ENCODE measurements at regions of chr4 and their contacts with region 1.

Region 1: GRCh38 chr4:102344954-102345794 is at the start of gene SLC39A8:
- DNase-seq: peak; percentile 61 to 96 (median 74)

Region 2: DNA sequence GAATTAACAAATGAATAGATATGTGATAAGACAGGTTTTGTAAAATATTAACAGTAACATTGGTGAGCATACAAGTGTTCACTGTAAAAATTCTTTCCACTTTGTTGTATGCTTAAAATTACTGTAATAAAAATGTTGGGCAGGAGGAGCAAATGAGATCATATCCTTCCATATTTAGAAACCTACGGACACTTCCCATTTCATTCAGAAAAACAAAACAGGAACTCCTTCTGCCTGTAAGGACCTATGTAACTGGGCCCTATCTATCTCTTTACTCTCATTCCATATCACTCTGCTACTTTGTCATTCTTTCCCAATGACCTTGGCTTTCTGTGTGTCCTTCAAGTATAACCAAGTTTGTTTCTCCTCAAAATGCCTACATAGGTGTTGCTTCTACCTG is 53.8 kb after region 1 on chr4:
- intact Hi-C with region 1: no loop called
- DNase-seq: no peak

Region 3: DNA sequence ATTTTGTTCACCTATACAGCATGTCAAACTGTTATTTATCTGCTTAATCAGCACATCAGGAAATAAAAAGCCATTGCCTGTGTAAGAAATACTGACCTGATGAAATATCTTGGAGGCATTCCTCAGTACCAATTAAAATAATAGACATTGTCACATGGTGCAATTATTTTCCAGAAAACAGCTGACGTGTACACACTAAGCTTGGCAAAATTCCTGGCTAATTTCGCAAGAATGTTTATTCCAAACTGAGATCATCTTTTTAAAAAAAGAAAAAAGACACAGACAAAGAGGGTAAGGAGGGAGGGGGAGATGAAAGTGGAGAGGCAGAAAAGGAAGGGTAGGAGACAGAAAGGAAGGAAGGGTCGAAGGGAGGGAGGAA is 94.1 kb after region 1 on chr4:
- intact Hi-C with region 1: loop called (anchors 10 kb)
- DNase-seq: no peak

Measured in posterior cingulate gyrus (tissue), 11 donors.